Posterior vena cava (tissue), 2 donors: ENCODE measurements at regions of chr6 and their contacts with region 1.

Region 1: GRCh38 chr6:155174576-155175211 is 89.1 kb upstream of the CLDN20 start:
- DNase-seq: no peak

Region 2: GRCh38 chr6:154868143-154868594 is 306.5 kb before region 1 on chr6:
- intact Hi-C with region 1: loop called in 1 of 2 experiments (anchors 10 kb)
- DNase-seq: no peak

Region 3: DNA sequence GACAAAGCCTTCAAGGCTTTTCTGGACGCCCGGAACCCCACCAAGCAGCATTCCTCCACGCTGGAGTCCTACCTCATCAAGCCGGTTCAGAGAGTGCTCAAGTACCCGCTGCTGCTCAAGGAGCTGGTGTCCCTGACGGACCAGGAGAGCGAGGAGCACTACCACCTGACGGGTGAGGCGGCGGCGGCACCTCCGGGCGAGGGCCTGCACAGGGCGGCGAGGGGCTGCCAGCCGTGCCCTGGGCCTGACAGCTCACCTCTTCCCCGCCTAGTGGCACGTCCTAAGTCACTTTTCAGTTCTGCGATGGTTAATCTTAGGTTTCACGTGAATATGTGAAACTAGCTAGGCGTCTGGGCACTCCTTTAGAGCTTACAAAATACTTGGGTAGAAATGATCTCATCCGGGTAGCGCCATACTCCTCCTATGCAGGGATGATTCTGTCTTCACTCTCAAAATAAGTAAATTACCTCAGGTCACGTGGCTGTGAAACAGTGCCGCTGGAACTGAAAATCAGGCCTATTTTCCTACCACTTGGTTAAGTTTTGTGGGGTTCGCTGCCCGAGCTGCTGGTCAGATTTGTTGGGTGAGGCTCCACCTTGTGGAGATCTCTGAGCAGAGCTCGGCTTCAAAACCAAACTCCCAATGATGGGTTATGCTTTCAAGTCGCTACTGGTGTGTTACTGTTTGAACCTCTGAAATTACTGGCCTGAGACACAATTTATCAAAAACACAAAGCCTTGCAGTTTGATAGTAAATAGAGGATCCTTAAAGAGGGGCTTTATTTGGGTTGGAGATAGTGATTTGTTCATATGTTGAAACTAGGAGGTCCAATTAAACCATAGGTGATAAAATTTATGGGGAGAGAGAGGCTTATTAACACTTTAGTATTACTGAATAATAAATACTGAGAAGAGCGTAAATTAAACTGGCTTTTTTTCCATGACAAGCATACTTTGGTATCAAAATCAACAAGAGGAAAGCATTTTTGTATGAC is 73.6 kb after region 1 on chr6:
- intact Hi-C with region 1: loop called in 1 of 2 experiments (anchors 5 kb)
- DNase-seq: no peak